HCT116 (cell line): ENCODE measurements at regions of chr6 and their contacts with region 1.

Region 1: DNA sequence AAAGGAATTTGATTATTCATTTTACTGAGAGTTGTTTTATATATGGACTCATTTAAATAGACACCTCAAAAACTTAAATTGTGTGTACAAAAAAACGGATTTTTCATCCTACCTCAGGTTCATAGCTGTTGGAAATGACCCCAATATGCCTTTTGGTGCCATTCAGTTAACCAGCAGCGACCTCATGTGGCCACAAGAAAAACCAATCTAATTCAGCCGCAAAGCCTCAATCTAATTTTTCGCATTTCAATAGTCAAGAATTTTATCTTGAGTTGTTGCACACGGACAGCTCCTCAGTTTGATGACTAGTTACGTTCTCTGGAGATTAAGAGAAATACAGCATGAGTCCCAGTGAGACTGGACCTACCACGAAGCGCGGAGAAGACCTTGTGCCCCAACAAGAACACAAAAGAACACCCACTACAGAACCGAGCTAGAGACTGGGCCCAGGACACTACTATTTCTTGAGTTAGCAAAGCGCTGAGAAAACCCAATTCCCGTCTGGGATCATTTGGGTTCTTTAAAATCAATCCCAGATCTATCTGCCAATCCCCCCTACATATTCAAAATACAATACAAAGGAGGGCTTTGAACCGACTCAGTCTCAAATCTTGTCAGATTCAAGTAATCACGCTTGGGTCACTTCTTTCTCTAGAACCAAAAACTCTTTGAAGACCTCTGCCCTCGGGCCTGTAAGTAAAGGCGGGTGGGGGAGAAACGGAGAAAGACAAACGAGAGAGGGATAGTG is 1.1 kb downstream of the TCP11 start:
- DNase-seq: peak; percentile 50
- ATAC-seq: peak; percentile 79
- H3K4me3 ChIP-seq: no peak overlapping the region
- H3K27ac ChIP-seq: no peak overlapping the region
- H3K4me1 ChIP-seq: no peaks in the 10 kb centered on the region
- H3K27me3 ChIP-seq: no peaks in the 10 kb centered on the region
- CTCF ChIP-seq: peak; percentile 78 to 91 (median 82)
- POLR2A ChIP-seq: no peak
- RAD21 ChIP-seq: peak; percentile 95

Region 2: GRCh38 chr6:34161857-34162515 is 978.1 kb before region 1 on chr6:
- CTCF ChIA-PET with region 1: interaction called, 7 read pairs
- POLR2A ChIA-PET with region 1: no interaction called
- RAD21 ChIA-PET with region 1: no interaction called
- intact Hi-C with region 1: loop called (anchors 10 kb)
- DNase-seq: no peak
- ATAC-seq: no peak
- H3K4me3 ChIP-seq: no peak overlapping the region
- H3K27ac ChIP-seq: no peak overlapping the region
- H3K4me1 ChIP-seq: peaks cover 0 to 4% of the 10 kb centered on the region in 2 experiments; a peak in 2 of 4 replicates
- H3K27me3 ChIP-seq: no peaks in the 10 kb centered on the region
- CTCF ChIP-seq: no peak
- POLR2A ChIP-seq: no peak
- RAD21 ChIP-seq: no peak

Region 3: DNA sequence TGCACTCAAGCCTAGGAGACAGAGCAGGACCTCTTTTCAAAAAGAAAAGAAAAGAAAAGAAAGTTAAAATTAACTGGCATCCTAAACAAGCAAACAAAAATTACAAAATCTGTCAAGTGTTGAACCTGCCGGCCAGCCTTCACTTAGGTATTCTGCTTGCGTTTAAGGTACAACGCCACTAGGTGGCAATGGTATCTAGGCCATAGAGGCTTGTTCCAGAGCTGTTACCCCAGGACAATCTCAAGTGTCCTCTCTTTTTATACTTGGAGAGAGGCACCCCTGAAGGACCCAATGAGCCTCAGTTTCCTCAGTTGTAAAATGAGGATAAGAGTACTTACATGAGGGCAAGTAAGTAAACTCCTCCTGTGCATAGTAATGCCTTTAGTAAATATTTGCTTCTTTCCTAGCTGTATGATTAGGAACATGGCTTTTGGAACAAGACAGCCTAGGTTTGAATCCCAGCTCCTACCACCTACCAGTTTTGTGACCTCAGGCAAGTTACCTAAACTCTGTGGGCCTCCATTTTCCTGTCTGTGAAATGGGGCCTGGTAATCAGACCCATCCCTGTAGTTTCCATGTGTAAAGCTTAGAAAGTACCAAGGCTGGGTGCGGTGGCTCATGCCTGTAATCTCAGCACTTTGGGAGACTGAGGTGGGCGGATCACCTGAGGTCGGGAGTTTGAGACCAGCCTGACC is 680.0 kb before region 1 on chr6:
- CTCF ChIA-PET with region 1: interaction called, 8 read pairs
- POLR2A ChIA-PET with region 1: no interaction called
- RAD21 ChIA-PET with region 1: interaction called in 1 of 2 experiments, 5 read pairs
- intact Hi-C with region 1: loop called (anchors 1 kb)
- DNase-seq: peak; percentile 70
- ATAC-seq: peak; percentile 56
- H3K4me3 ChIP-seq: no peak overlapping the region
- H3K27ac ChIP-seq: no peak overlapping the region
- H3K4me1 ChIP-seq: peaks cover 8 to 35% of the 10 kb centered on the region in 2 experiments
- H3K27me3 ChIP-seq: no peaks in the 10 kb centered on the region
- CTCF ChIP-seq: peak; percentile 68 to 85 (median 85)
- POLR2A ChIP-seq: no peak
- RAD21 ChIP-seq: peak; percentile 97

Region 4: DNA sequence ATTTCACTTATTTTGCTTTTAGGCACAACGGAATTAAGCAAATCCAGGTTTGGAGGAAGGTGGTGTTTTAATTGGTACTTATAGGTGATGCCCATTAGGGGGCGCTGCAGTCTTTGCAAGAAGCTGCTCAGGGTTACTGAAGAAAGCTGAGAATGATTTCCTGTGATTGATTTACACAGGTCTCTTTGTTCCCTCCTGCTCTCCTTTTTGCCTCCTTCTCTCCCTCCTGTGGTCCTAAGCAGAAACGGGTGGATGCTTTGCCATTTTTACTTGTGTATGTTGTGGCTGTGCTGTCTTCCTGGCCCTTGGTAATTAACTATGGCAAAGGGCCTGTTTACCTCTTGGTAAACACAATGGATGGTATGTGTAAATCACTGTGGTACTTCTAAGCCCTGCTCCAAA is 153.2 kb before region 1 on chr6:
- CTCF ChIA-PET with region 1: interaction called, 31 read pairs
- POLR2A ChIA-PET with region 1: no interaction called
- RAD21 ChIA-PET with region 1: interaction called, 7 to 10 read pairs
- intact Hi-C with region 1: loop called (anchors 1 kb)
- DNase-seq: peak; percentile 36
- ATAC-seq: peak; percentile 80
- H3K4me3 ChIP-seq: no peak overlapping the region
- H3K27ac ChIP-seq: no peak overlapping the region
- H3K4me1 ChIP-seq: peaks cover 0 to 4% of the 10 kb centered on the region in 2 experiments; a peak in 2 of 4 replicates
- H3K27me3 ChIP-seq: no peaks in the 10 kb centered on the region
- CTCF ChIP-seq: peak; percentile 63 to 93 (median 80); a peak in 5 of 6 replicates
- POLR2A ChIP-seq: no peak
- RAD21 ChIP-seq: peak; percentile 78

Region 5: GRCh38 chr6:35173427-35174087 is 33.5 kb after region 1 on chr6:
- CTCF ChIA-PET with region 1: no interaction called
- POLR2A ChIA-PET with region 1: no interaction called
- RAD21 ChIA-PET with region 1: no interaction called
- intact Hi-C with region 1: no loop called
- DNase-seq: no peak
- ATAC-seq: peak; percentile 35; the same call in 1 of the 2 replicates
- H3K4me3 ChIP-seq: no peak overlapping the region
- H3K27ac ChIP-seq: no peak overlapping the region
- H3K4me1 ChIP-seq: peaks cover 0 to 6% of the 10 kb centered on the region in 2 experiments; a peak in 2 of 4 replicates
- H3K27me3 ChIP-seq: no peaks in the 10 kb centered on the region
- CTCF ChIP-seq: no peak
- POLR2A ChIP-seq: no peak
- RAD21 ChIP-seq: no peak

Region 6: DNA sequence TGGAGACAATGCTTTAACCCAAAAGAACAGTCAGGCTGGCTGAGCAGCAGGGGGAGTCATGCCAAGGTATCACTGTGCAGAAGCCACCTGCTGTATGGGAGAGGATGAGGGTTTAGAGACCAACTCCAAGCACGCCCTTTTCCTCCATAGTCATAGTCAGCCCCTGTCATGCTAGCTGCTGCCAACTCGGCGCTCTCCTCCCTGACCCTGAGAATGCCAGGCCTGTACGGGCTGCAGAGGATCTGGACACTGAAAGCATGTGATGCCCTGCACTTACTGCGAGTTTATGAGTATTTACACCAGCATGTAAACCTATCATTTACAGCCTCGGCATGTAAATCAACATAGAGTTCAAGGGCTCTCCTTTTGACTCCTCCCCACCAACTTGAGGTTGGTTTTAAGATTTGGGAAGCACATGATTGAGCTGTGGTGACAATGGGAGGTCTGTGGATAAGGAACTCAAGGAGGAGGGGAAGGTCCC is 62.0 kb after region 1 on chr6:
- CTCF ChIA-PET with region 1: interaction called, 36 read pairs
- POLR2A ChIA-PET with region 1: no interaction called
- RAD21 ChIA-PET with region 1: interaction called in 1 of 2 experiments, 5 read pairs
- intact Hi-C with region 1: no loop called
- DNase-seq: no peak
- ATAC-seq: no peak
- H3K4me3 ChIP-seq: no peak overlapping the region
- H3K27ac ChIP-seq: no peak overlapping the region
- H3K4me1 ChIP-seq: no peaks in the 10 kb centered on the region; a peak in 1 of 4 replicates
- H3K27me3 ChIP-seq: peaks cover 13% of the 10 kb centered on the region; the same call in 1 of the 2 replicates
- CTCF ChIP-seq: no peak
- POLR2A ChIP-seq: no peak
- RAD21 ChIP-seq: no peak

Region 7: GRCh38 chr6:35240840-35241801 is 101.0 kb after region 1 on chr6:
- CTCF ChIA-PET with region 1: interaction called, 14 read pairs
- POLR2A ChIA-PET with region 1: no interaction called
- RAD21 ChIA-PET with region 1: interaction called, 3 to 4 read pairs
- intact Hi-C with region 1: no loop called
- DNase-seq: peak; percentile 38
- ATAC-seq: peak; percentile 99
- H3K4me3 ChIP-seq: no peak overlapping the region
- H3K27ac ChIP-seq: no peak overlapping the region
- H3K4me1 ChIP-seq: no peaks in the 10 kb centered on the region
- H3K27me3 ChIP-seq: no peaks in the 10 kb centered on the region
- CTCF ChIP-seq: peak; percentile 86 to 100 (median 98)
- POLR2A ChIP-seq: no peak
- RAD21 ChIP-seq: peak; percentile 95